ENCODE measurements at regions of chr16 and their contacts with region 1.

Region 1: DNA sequence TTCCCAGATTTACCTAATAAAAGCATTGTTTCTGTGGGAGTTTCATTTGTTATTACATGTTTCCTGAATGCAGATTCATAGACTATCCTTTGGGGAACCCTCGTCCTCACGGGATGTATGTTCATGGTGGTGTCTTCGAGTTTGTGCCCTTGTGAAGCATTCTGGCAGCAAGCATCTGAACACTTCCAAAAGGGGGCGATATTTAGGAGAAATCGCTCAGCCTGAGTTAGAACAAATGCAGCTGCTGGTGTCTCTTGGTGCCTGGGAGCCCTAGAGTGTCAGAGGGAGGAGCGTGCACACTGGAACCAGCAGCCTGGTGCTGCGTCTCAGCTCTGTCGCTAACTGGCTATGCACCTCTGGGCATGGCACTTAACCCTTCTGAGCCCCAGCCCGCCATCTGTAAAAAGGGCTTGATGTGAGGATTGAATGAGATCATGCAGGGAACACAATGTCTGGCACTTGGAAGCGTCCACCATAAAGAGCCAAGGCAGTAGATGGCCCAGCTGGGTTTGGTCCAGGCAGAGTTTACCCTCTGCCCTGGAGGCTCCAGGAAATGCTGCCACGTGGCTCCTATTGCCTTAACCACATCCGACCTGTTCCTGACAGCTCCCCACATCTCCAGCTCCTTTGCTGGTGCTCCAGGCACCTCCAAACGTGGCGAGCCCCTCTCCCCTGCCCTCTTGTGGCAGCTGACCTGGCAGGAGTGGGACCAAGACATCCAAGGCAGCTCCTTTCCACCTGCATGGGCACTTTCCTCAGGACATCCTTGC is 25.0 kb upstream of the C16orf78 start:
- DNase-seq: no peak
- ATAC-seq: no peak
- H3K4me3 Mint-ChIP-seq: no peak overlapping the region
- H3K27ac Mint-ChIP-seq: no peak overlapping the region
- H3K4me1 Mint-ChIP-seq: no peaks in the 10 kb centered on the region
- H3K27me3 Mint-ChIP-seq: peaks cover 12% of the 10 kb centered on the region
- CTCF ChIP-seq: no peak

Region 2: GRCh38 chr16:48687421-48688038 is 661.1 kb before region 1 on chr16:
- CTCF ChIA-PET with region 1: interaction called, 8 read pairs
- POLR2A ChIA-PET with region 1: no interaction called
- intact Hi-C with region 1: loop called (anchors 5 kb)
- DNase-seq: peak; percentile 59
- ATAC-seq: peak; percentile 71
- H3K4me3 Mint-ChIP-seq: no peak overlapping the region
- H3K27ac Mint-ChIP-seq: no peak overlapping the region
- H3K4me1 Mint-ChIP-seq: peaks cover 2% of the 10 kb centered on the region
- H3K27me3 Mint-ChIP-seq: peaks cover 10% of the 10 kb centered on the region
- CTCF ChIP-seq: peak; percentile 76

Measured in activated CD8-positive, alpha-beta T cell treated with anti-CD3 and anti-CD28 coated beads for 36 hours (primary cell).